Activated CD8-positive, alpha-beta T cell treated with anti-CD3 and anti-CD28 coated beads for 36 hours (primary cell): ENCODE measurements at regions of chr1 and their contacts with region 1.

Region 1: GRCh38 chr1:65075123-65075976 is 72.7 kb upstream of the AK4 start:
- DNase-seq: peak; percentile 79
- ATAC-seq: peak; percentile 95
- H3K4me3 Mint-ChIP-seq: no peak overlapping the region
- H3K27ac Mint-ChIP-seq: no peak overlapping the region
- H3K4me1 Mint-ChIP-seq: peaks cover 10% of the 10 kb centered on the region
- H3K27me3 Mint-ChIP-seq: peaks cover 1% of the 10 kb centered on the region
- CTCF ChIP-seq: peak; percentile 84

Region 2: DNA sequence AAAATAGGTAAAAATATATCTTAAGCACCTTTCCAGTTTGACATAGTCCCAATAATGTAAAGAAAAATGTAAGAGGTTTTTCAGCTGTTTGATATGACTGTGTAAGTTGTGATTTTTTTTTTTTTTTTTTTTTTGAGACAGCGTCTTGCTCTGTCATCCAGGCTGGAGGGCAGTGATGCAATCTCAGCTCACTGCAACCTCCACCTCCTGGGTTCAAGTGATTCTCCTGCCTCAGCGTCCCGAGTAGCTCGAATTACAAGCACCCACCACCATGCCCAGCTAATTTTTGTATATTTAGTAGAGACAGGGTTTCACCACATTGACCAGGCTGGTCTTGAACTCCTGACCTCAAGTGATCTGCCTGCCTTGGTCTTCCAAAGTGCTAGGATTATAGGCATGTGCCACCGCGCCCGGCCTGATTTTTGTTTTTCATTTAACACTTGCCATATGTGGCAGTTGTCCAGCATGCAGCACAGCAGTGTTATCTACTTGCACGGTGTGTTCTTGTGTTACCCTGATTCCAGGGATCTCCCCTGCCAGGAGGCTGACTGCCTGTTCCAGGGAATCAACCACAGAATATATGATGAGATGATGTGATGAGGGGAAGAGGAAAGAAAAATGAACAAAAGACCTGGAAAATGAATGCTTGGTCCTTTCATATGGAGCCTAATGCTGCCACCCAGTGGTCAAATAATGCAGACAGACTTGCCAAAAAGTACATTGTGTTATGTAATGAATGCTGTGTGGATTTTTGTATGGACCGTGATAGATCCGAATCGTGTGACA is 251.5 kb before region 1 on chr1:
- CTCF ChIA-PET with region 1: interaction called, 13 read pairs
- POLR2A ChIA-PET with region 1: no interaction called
- intact Hi-C with region 1: no loop called
- DNase-seq: peak; percentile 81
- ATAC-seq: no peak
- H3K4me3 Mint-ChIP-seq: no peak overlapping the region
- H3K27ac Mint-ChIP-seq: no peak overlapping the region
- H3K4me1 Mint-ChIP-seq: peaks cover 30% of the 10 kb centered on the region
- H3K27me3 Mint-ChIP-seq: no peaks in the 10 kb centered on the region
- CTCF ChIP-seq: peak; percentile 90

Region 3: GRCh38 chr1:65036545-65037180 is 38.7 kb before region 1 on chr1:
- CTCF ChIA-PET with region 1: interaction called, 10 read pairs
- POLR2A ChIA-PET with region 1: no interaction called
- intact Hi-C with region 1: no loop called
- DNase-seq: no peak
- ATAC-seq: no peak
- H3K4me3 Mint-ChIP-seq: no peak overlapping the region
- H3K27ac Mint-ChIP-seq: no peak overlapping the region
- H3K4me1 Mint-ChIP-seq: peaks cover 13% of the 10 kb centered on the region
- H3K27me3 Mint-ChIP-seq: no peaks in the 10 kb centered on the region
- CTCF ChIP-seq: no peak

Region 4: DNA sequence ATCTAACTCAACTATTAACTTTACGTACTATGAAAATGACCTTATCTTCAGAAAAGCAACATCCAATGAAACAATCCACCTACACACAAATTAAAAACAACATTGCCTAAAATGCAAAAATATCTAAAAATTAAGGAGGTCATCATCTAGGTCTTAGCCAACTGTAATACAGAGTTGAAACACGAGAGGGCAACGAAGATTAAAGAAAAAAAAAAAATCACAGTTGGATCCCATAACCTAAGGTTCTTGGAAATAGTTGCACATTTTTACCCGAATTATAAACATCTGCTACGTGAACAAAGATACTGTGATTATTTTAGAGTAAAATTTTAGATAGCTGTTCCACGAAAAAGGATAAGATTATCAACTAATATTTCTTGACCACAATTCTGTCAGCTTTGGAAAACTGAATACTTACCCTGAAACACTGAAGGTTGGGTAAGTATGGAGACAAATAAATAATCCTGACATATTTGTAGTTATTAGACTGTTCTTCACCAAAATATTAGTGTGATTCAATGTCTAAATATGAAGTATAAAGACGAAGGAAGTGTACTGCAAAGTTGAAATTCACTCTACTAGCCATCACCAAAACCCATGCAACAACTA is 15.3 kb before region 1 on chr1:
- CTCF ChIA-PET with region 1: interaction called, 124 read pairs
- POLR2A ChIA-PET with region 1: no interaction called
- intact Hi-C with region 1: no loop called
- DNase-seq: no peak
- ATAC-seq: peak; percentile 66
- H3K4me3 Mint-ChIP-seq: no peak overlapping the region
- H3K27ac Mint-ChIP-seq: no peak overlapping the region
- H3K4me1 Mint-ChIP-seq: peaks cover 44% of the 10 kb centered on the region
- H3K27me3 Mint-ChIP-seq: no peaks in the 10 kb centered on the region
- CTCF ChIP-seq: peak; percentile 70

Region 5: GRCh38 chr1:65097076-65097475 is 21.7 kb after region 1 on chr1:
- CTCF ChIA-PET with region 1: no interaction called
- POLR2A ChIA-PET with region 1: no interaction called
- intact Hi-C with region 1: no loop called
- DNase-seq: no peak
- ATAC-seq: no peak
- H3K4me3 Mint-ChIP-seq: no peak overlapping the region
- H3K27ac Mint-ChIP-seq: no peak overlapping the region
- H3K4me1 Mint-ChIP-seq: no peaks in the 10 kb centered on the region
- H3K27me3 Mint-ChIP-seq: peaks cover 5% of the 10 kb centered on the region
- CTCF ChIP-seq: no peak

Region 6: GRCh38 chr1:65687428-65688214 is 612.3 kb after region 1 on chr1:
- CTCF ChIA-PET with region 1: interaction called, 13 read pairs
- POLR2A ChIA-PET with region 1: no interaction called
- intact Hi-C with region 1: no loop called
- DNase-seq: peak; percentile 81
- ATAC-seq: peak; percentile 86
- H3K4me3 Mint-ChIP-seq: no peak overlapping the region
- H3K27ac Mint-ChIP-seq: no peak overlapping the region
- H3K4me1 Mint-ChIP-seq: no peaks in the 10 kb centered on the region
- H3K27me3 Mint-ChIP-seq: peaks cover 14% of the 10 kb centered on the region
- CTCF ChIP-seq: peak; percentile 96